ENCODE measurements at regions of chr15 and their contacts with region 1.

Region 1: GRCh38 chr15:68441045-68441743 is 9.2 kb upstream of the ITGA11 start:
- DNase-seq: no peak

Region 2: GRCh38 chr15:67803996-67804843 is 637.0 kb before region 1 on chr15:
- intact Hi-C with region 1: loop called in 1 of 2 experiments (anchors 5 kb)
- DNase-seq: no peak

Region 3: GRCh38 chr15:68145706-68146105 is 295.5 kb before region 1 on chr15:
- intact Hi-C with region 1: no loop called
- DNase-seq: no peak

Measured in posterior vena cava (tissue), 2 donors.